BJ (cell line): ENCODE measurements at regions of chr1 and their contacts with region 1.

Region 1: GRCh38 chr1:180188091-180188506 is 33.4 kb downstream of the QSOX1 start:
- DNase-seq: no peak
- H3K4me3 ChIP-seq: no peak overlapping the region
- H3K27me3 ChIP-seq: no peaks in the 10 kb centered on the region
- CTCF ChIP-seq: peak; percentile 85

Region 2: DNA sequence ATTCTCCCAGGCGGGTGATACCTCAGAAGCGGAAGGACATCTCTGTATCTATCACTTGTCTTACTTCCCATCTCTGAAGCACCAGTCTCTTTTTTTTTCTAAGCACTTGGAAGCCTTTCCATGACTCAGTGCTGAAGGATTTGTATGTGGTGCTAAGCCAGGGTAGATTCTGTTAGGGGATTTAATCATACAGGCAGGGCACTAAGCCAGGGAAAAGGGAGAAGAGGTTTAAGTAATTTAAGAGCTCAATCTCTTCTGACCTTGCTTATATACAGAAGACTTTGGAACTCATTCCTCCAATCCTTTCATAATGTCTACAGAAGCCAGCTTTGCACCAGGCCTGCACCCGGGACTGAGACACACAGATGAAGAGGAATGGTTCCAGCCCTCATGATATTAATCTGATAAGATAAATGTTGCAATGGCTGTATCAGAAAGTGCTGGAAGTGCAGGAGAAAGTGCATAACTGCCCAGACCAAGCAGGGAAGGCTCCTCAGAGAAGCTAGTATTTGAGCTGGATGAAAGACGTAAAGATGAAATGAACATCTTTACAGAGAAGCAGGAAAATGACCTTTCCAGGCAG is 434.0 kb before region 1 on chr1:
- CTCF ChIA-PET with region 1: no interaction called
- POLR2A ChIA-PET with region 1: no interaction called
- DNase-seq: peak; percentile 7
- H3K4me3 ChIP-seq: no peak overlapping the region
- H3K27me3 ChIP-seq: no peaks in the 10 kb centered on the region
- CTCF ChIP-seq: no peak

Region 3: GRCh38 chr1:180057883-180058396 is 130.2 kb before region 1 on chr1:
- CTCF ChIA-PET with region 1: no interaction called
- POLR2A ChIA-PET with region 1: no interaction called
- DNase-seq: no peak
- H3K4me3 ChIP-seq: no peak overlapping the region
- H3K27me3 ChIP-seq: no peaks in the 10 kb centered on the region
- CTCF ChIP-seq: no peak

Region 4: GRCh38 chr1:180123463-180123936 is 64.6 kb before region 1 on chr1:
- CTCF ChIA-PET with region 1: no interaction called
- POLR2A ChIA-PET with region 1: no interaction called
- DNase-seq: no peak
- H3K4me3 ChIP-seq: no peak overlapping the region
- H3K27me3 ChIP-seq: no peaks in the 10 kb centered on the region
- CTCF ChIP-seq: no peak

Region 5: DNA sequence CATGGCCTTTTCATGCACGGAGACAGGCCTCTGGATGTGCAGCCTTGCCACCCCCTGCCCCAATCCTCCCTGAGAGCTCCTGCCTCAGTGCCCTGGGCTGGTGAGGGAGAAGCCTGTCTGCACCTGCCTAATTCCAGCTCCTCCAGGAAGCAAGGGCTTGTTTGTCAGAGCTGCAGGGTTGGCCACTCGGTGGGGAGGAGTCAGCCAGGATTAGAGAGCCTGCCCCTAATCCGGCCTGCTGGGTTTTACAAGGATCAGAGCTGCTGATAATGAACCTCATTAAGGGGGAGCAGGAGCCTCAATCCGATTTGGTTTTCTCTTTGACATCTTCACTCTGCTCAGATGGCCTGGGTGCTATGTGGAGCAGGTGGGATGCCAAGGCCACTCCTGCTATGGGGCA is 10.1 kb after region 1 on chr1:
- CTCF ChIA-PET with region 1: interaction called, 38 read pairs
- POLR2A ChIA-PET with region 1: no interaction called
- DNase-seq: no peak
- H3K4me3 ChIP-seq: no peak overlapping the region
- H3K27me3 ChIP-seq: no peaks in the 10 kb centered on the region
- CTCF ChIP-seq: no peak

Region 6: GRCh38 chr1:180415985-180416633 is 228.0 kb after region 1 on chr1:
- CTCF ChIA-PET with region 1: interaction called, 14 read pairs
- POLR2A ChIA-PET with region 1: no interaction called
- DNase-seq: no peak
- H3K4me3 ChIP-seq: no peak overlapping the region
- H3K27me3 ChIP-seq: no peaks in the 10 kb centered on the region
- CTCF ChIP-seq: peak; percentile 63

Region 7: DNA sequence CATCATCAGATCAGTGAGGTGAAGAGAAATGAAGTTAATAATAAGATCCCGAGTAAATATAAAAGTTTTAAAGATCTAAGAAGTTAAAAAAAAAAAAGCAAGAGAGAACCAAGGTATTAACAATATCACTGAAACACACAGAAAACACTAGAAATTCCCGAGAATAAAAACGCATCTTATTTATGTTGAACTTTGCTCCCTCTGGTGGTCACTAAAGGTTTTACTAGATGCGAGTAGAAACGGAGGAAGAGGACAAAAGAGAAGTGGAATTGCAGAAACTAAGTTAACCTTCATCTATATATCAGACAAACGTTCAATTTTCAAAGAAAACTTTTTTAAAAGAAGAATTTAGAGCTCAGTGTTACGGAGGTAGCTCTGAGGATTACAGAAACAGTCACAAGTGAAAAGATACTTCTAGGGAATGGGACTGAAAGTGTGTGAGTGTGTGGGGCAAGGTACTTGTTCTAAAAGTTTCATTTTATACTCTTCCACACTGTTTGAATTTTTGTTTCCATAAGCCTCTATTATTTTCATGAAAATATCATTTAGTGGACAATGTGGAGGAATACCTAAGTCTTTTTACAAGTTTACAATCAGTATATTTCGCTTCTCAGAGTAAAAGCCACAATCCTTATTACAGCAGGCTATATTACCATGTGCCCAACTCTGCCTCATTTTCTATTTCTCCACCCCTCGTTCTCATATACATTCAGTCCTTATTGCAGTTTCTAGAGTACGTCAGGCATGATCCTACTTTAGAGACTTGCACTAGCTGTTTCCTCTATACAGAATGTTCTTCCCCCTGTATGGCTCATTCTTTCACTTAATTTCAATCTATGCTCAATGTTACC is 294.6 kb after region 1 on chr1:
- CTCF ChIA-PET with region 1: interaction called, 21 read pairs
- POLR2A ChIA-PET with region 1: no interaction called
- DNase-seq: no peak
- H3K4me3 ChIP-seq: no peak overlapping the region
- H3K27me3 ChIP-seq: no peaks in the 10 kb centered on the region
- CTCF ChIP-seq: peak; percentile 72